Endothelial cell of umbilical vein (primary cell): ENCODE measurements at regions of chr9 and their contacts with region 1.

Region 1: GRCh38 chr9:34233672-34234071 is 54.8 kb downstream of the UBAP1 start:
- DNase-seq: no peak
- H3K4me3 ChIP-seq: no peak overlapping the region
- H3K27ac ChIP-seq: no peak overlapping the region
- H3K4me1 ChIP-seq: no peaks in the 10 kb centered on the region
- H3K27me3 ChIP-seq: no peaks in the 10 kb centered on the region
- CTCF ChIP-seq: no peak
- POLR2A ChIP-seq: no peak

Region 2: GRCh38 chr9:34185778-34186551 is 47.7 kb before region 1 on chr9:
- CTCF ChIA-PET with region 1: no interaction called
- POLR2A ChIA-PET with region 1: no interaction called
- dilution Hi-C with region 1: no loop called
- intact Hi-C with region 1: loop called (anchors 10 kb)
- DNase-seq: peak; percentile 92
- H3K4me3 ChIP-seq: peak overlapping the region in 1 of 3 experiments; percentile 34
- H3K27ac ChIP-seq: peak overlapping the region; percentile 50
- H3K4me1 ChIP-seq: peaks cover 20% of the 10 kb centered on the region
- H3K27me3 ChIP-seq: no peaks in the 10 kb centered on the region
- CTCF ChIP-seq: no peak
- POLR2A ChIP-seq: peak; percentile 63